Dendritic cell treated with granulocyte-macrophage colony-stimulating factor and Interleukin-4, amounts not matched to agents 40 ng/mL and 50 ng/mL, for 4 days (primary cell): ENCODE measurements at regions of chr5 and their contacts with region 1.

Region 1: GRCh38 chr5:75690669-75691068 is 26.6 kb downstream of the POC5 start:
- H3K4me3 Mint-ChIP-seq: no peak overlapping the region
- H3K27ac Mint-ChIP-seq: no peak overlapping the region
- H3K4me1 Mint-ChIP-seq: no peaks in the 10 kb centered on the region
- H3K27me3 Mint-ChIP-seq: no peaks in the 10 kb centered on the region

Region 2: DNA sequence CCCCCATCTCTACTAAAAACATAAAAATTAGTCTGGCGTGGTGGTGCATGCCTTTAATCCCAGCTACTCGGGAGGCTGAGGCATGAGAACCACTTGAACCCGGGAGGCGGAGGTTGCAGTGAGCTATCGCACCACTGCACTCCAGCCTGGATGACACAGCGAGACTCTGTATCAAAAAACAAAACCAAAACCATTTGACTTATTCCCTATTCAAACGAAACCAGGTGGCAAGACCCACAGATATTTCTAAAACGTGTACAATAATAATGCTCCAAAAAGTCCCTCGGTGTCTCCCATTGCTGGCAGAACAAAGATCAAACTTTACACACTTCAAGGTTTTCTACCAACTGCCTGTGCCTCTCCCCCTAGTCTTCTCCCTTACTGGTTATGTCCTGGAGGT is 323.9 kb before region 1 on chr5:
- intact Hi-C with region 1: loop called (anchors 5 kb)
- H3K4me3 Mint-ChIP-seq: no peak overlapping the region
- H3K27ac Mint-ChIP-seq: no peak overlapping the region
- H3K4me1 Mint-ChIP-seq: no peaks in the 10 kb centered on the region
- H3K27me3 Mint-ChIP-seq: no peaks in the 10 kb centered on the region